Breast epithelium (tissue), 4 donors: ENCODE measurements at regions of chr10 and their contacts with region 1.

Region 1: DNA sequence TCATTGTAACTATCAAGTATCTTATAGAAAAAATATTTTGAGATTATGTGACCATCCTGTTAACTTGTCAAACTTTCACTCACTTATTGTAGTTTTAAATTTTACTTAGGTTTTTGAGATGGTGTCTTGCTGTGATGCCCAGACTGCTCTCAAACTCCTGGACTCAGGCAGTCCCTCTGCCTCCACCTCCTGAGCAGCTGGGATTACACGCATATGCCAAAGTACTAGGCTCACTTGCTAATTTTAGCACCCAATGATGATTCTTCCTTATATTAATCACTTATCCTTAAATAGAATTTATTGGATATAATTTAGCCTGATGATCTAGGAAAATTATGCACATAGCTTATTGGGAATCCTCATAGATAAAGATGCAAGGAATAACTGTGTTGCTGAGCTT is 104.9 kb downstream of the BTRC start:
- DNase-seq: no peak
- H3K4me3 ChIP-seq: no peak overlapping the region
- H3K27ac ChIP-seq: no peak overlapping the region
- H3K4me1 ChIP-seq: peaks cover 0 to 3% of the 10 kb centered on the region in 2 donors
- H3K27me3 ChIP-seq: no peaks in the 10 kb centered on the region
- CTCF ChIP-seq: no peak
- POLR2A ChIP-seq: no peak

Region 2: DNA sequence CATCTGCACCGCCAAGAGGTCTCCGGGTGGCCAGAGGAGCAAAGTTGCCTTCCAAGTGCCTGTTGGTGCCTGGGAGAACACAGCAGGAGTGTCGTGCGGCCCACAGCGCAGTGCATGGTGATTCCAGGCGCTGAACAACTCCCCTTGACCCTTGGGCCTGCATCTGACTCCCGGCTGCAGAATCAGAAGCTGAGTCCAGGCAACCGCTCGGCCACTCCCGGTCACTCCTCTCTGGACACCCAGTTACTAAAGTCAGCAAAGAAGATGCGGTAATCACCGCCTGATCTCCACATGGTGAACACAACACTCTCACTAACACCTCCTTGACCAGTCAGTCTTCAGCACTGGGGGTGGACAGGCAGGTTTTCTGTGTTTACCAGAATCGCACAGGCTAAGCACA is 1076.3 kb before region 1 on chr10:
- intact Hi-C with region 1: no loop called
- DNase-seq: no peak
- H3K4me3 ChIP-seq: no peak overlapping the region
- H3K27ac ChIP-seq: no peak overlapping the region
- H3K4me1 ChIP-seq: no peaks in the 10 kb centered on the region
- H3K27me3 ChIP-seq: no peaks in the 10 kb centered on the region
- CTCF ChIP-seq: no peak
- POLR2A ChIP-seq: no peak

Region 3: GRCh38 chr10:101429423-101429822 is 29.4 kb before region 1 on chr10:
- intact Hi-C with region 1: no loop called
- DNase-seq: no peak
- H3K4me3 ChIP-seq: no peak overlapping the region
- H3K27ac ChIP-seq: no peak overlapping the region
- H3K4me1 ChIP-seq: no peaks in the 10 kb centered on the region
- H3K27me3 ChIP-seq: no peaks in the 10 kb centered on the region
- CTCF ChIP-seq: no peak
- POLR2A ChIP-seq: no peak

Region 4: DNA sequence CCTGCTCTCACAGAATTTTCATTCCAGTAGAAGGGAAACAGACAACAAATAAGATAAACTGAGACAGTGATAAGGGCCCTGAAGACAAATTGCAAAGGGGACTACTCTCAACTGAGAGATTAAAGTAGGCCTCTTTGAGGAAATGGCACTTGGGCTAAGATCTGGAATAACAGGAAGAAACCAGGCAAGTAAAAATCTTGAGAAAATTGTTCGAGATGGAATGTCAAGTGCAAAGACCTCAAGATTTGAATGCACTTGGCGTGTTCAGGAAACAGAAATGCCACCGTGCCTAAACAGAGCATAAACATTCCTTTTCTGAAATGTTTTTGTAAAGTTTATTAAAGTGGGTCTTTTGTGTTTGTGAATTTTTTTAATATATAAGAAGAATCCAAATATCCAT is 586.4 kb after region 1 on chr10:
- intact Hi-C with region 1: loop called (anchors 5 kb)
- DNase-seq: no peak
- H3K4me3 ChIP-seq: no peak overlapping the region
- H3K27ac ChIP-seq: no peak overlapping the region
- H3K4me1 ChIP-seq: no peaks in the 10 kb centered on the region
- H3K27me3 ChIP-seq: no peaks in the 10 kb centered on the region
- CTCF ChIP-seq: no peak
- POLR2A ChIP-seq: no peak

Region 5: DNA sequence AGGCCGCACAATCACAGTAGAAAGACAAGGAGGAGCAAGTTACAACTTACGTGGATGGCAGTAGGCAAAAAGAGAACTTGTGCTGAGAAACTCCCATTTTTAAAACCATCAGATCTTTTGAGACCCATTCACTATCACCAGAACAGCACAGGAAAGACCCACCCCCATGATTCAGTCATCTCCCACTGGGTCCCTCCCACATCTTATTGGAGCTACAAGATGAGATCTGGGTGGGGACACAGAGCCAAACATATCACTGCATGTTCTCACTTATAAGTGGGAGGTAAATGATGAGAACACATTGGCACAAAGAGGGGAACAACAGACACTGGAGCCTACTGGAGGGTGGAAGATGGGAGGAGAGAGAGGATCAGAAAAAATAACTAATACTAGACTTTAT is 725.7 kb after region 1 on chr10:
- intact Hi-C with region 1: no loop called
- DNase-seq: no peak
- H3K4me3 ChIP-seq: no peak overlapping the region
- H3K27ac ChIP-seq: no peak overlapping the region
- H3K4me1 ChIP-seq: no peaks in the 10 kb centered on the region
- H3K27me3 ChIP-seq: no peaks in the 10 kb centered on the region
- CTCF ChIP-seq: no peak
- POLR2A ChIP-seq: no peak